ENCODE measurements at regions of chr9 and their contacts with region 1.

Region 1: DNA sequence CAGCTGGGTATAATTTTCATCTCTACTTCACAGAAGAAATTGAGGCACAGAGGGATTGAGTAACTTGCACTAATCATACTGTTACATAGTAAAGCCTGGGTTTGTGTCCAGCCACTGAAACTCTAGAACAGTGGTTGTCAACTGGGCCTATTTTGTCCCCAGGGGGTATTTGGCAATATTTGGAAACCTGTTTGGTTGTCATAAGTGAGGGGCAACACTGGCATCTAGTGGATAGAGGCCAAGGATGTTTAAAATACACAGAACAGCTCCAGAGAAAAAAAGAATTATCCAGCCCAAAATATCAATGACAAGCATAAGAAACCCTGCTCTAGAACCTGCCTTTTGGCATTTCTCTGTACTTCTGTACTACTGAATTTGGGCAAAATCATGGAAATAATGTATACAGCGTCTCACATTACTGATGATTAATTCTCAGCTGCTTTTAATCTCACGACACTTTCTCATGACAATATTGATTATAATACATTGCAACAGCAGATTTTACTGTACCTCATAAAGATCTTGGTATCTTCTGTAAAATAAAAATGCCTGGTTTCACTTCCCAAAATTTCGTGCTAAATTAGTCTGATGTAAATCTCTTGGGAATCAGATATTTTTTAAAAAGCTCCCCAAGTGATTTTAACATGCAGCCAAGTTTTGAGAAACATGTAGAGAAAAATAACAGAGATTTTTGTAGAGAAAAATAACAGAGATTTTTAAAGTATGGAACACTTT is 112.7 kb downstream of the RORB start:
- DNase-seq: no peak
- H3K4me3 ChIP-seq: no peak overlapping the region
- H3K27ac ChIP-seq: no peak overlapping the region
- H3K4me1 ChIP-seq: no peaks in the 10 kb centered on the region
- H3K27me3 ChIP-seq: no peaks in the 10 kb centered on the region
- CTCF ChIP-seq: no peak
- POLR2A ChIP-seq: no peak

Region 2: DNA sequence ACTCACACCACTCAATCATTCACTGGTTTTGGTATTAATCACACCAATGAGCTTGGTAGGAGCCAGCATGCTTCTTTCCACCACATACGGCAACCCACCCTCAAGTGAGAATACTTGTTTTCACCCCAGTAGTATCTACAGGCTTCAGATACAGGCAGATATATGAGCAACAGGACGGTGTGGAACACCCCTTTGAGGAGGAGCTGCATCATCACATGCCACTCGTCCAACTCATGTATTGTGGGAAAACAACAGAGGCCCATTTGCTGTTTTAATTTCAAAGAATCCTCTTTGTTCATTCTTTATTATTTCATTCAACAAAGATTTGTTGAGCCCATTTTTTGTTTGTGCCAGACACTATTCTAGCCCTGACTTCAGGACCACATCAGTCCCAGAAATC is 66.7 kb before region 1 on chr9:
- intact Hi-C with region 1: loop called (anchors 10 kb)
- DNase-seq: no peak
- H3K4me3 ChIP-seq: no peak overlapping the region
- H3K27ac ChIP-seq: no peak overlapping the region
- H3K4me1 ChIP-seq: no peaks in the 10 kb centered on the region
- H3K27me3 ChIP-seq: no peaks in the 10 kb centered on the region
- CTCF ChIP-seq: no peak
- POLR2A ChIP-seq: no peak